ENCODE measurements at regions of chr14 and their contacts with region 1.

Region 1: DNA sequence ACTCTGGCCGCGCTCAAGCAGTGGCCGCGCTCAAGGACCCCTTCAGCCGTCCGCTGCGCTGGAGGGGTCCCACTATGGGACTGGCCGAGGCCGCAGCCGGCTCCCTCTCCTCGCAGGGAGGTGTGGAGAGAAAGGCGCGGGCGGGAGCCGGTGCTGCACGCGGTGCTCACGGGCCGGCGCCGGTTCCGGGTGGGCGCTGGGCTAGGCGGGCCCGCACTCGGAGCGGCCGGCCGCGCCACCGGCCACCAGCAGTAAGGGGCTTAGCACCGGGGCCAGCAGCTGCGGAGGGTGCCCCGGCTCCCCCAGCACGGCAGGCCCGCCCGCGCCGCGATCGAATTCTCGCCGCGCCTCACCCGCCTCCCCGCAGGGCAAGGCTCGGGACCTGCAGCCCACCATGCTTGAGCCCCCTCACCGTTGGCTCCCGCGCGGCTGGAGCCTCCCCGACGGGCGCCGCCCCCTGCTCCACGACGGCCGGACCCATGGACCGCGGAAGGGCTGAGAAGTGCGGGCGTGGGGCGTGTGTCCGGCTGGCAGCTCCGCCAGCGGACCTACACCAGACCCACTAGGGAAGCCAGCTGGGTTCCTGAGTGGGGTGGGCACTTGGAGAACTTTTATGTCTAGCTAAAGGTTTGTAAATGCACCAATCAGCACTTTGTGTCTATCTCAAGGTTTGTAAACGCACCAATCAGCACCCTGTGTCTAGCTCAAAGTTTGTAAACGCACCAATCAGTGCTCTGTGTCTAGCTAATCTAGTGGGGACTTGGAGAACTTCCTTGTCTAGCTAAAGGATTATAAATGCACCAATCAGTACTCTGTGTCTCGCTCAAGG is 49.5 kb downstream of the KLHL28 start:
- DNase-seq: peak in 3 of 6 donors; percentile 11 to 74 (median 65)
- ATAC-seq: peak; percentile 38 to 67 (median 50)
- H3K4me3 ChIP-seq: peak overlapping the region; percentile 13 to 54 (median 30)
- H3K27ac ChIP-seq: no peak overlapping the region
- H3K4me1 ChIP-seq: peaks cover 0 to 3% (median 0%) of the 10 kb centered on the region in 3 donors
- H3K27me3 ChIP-seq: no peaks in the 10 kb centered on the region
- CTCF ChIP-seq: no peak

Region 2: DNA sequence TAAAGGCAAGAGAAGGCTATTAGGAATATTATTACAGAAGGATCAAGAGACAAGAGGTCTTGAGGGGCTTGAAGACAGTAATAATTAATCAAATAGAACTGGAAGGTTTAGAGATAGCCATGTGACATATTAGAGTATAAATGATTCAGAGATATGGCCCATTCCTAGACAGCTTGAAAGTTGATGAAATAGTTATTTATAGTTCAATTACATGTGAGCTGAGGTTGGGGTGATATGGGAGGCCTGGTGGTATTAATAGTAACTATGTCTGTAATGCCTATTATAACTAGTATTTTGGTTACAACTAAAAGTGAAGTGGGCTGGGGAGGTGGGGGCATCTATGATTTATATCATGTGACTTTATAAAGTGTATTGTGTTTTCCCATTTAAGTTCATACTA is 354.8 kb after region 1 on chr14:
- intact Hi-C with region 1: loop called in 2 of 3 experiments (anchors 5 to 10 kb)
- DNase-seq: no peak
- ATAC-seq: no peak
- H3K4me3 ChIP-seq: no peak overlapping the region
- H3K27ac ChIP-seq: no peak overlapping the region
- H3K4me1 ChIP-seq: no peaks in the 10 kb centered on the region
- H3K27me3 ChIP-seq: no peaks in the 10 kb centered on the region
- CTCF ChIP-seq: no peak